ENCODE measurements at regions of chr1 and their contacts with region 1.

Region 1: DNA sequence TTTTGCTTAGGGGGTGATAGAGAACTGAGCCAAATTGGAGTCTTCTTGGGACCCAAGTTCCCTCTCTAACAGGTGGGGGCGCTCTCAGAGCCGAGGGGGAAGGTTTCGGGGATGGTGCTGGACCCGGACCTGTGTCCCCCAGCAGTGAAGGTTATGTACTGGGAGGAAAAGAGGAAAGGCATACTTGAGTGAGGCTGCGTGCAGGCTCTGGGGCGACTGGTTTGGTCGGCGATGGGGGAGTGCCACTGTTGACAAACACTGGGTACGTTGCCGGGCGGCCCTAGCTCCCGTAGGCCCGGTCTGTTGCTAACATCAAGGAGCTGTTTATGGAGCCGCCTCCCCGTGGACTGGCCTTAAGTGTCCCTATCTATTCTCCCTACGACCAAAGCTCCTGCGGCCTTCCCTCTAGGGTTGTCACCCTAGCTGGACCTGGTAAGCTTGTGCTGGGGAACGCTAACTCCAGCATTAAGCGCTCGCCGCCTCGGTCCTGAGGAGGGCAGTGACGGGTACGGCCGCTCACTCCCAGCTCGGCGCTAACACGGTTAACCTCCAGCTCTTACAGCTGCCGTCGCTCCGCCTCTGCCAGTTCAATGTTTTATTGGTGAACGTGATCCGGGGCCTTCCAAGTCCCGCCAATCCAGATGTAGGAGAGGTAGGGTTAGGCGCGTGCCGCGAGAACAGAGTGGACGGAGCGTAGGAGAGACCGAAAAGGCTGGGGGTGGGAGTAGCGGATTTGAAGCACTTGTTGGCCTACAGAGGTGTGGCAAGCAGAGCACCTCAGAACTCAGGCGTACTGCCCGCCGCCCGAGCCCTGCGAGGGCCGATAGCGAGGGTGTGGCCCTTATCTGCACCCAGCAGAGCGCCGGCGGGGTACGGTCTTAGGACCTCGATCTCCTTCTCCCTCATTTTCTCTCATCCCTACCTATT is at the start of gene PPOX:
- DNase-seq: peak; percentile 99
- H3K4me3 ChIP-seq: peak within 1 kb of the TSS; percentile 81 to 87 (median 87)
- H3K27ac ChIP-seq: peak within 1 kb of the TSS; percentile 74
- H3K4me1 ChIP-seq: peaks cover 16% of the 10 kb centered on the region
- H3K27me3 ChIP-seq: no peaks in the 10 kb centered on the region
- CTCF ChIP-seq: peak; percentile 42 to 60
- POLR2A ChIP-seq: peak; percentile 21
- total RNA-seq, gene PPOX: 28.5 and 28.9 TPM in 2 replicates

Region 2: DNA sequence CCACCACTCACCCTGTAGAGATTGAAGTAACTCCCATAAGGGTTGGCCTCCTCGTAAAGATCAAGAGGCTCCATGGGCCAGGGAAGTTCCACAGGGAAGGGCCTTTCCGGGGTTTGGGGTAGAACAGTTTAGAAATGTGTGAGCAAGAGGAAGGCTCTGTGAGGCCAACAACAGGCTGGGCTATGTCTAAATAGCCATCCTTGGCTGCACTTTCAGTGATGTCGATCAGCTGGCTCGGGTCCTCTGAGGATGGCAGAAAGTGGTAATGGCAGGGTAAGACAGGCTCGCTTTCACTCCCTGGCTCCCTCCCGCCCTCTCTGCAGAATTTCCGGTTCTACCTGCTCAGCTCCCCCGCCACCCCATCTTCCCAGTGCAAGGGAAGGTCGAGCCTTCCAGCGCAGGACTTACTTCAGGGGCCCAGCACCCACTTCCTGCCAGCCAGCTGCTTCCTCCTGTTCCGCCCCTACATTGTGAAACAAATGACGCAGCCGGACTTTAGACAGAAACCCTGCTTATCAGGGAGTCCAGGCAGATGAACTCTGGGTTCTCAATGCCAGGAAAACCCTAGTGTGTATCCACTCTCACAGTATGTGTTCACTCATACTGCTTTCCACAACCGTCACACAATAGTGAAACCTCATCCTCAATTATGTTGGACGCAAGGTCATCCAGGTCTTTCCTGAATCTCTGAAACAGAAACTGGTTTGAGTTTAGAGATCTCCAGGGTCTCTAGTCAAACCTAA is 152.3 kb before region 1 on chr1:
- CTCF ChIA-PET with region 1: no interaction called
- POLR2A ChIA-PET with region 1: no interaction called
- dilution Hi-C with region 1: no loop called
- intact Hi-C with region 1: no loop called
- DNase-seq: peak; percentile 99
- H3K4me3 ChIP-seq: peak overlapping the region in 2 of 3 experiments; percentile 1 to 21
- H3K27ac ChIP-seq: peak overlapping the region; percentile 99
- H3K4me1 ChIP-seq: peaks cover 37% of the 10 kb centered on the region
- H3K27me3 ChIP-seq: no peaks in the 10 kb centered on the region
- CTCF ChIP-seq: no peak
- POLR2A ChIP-seq: peak; percentile 70

Region 3: DNA sequence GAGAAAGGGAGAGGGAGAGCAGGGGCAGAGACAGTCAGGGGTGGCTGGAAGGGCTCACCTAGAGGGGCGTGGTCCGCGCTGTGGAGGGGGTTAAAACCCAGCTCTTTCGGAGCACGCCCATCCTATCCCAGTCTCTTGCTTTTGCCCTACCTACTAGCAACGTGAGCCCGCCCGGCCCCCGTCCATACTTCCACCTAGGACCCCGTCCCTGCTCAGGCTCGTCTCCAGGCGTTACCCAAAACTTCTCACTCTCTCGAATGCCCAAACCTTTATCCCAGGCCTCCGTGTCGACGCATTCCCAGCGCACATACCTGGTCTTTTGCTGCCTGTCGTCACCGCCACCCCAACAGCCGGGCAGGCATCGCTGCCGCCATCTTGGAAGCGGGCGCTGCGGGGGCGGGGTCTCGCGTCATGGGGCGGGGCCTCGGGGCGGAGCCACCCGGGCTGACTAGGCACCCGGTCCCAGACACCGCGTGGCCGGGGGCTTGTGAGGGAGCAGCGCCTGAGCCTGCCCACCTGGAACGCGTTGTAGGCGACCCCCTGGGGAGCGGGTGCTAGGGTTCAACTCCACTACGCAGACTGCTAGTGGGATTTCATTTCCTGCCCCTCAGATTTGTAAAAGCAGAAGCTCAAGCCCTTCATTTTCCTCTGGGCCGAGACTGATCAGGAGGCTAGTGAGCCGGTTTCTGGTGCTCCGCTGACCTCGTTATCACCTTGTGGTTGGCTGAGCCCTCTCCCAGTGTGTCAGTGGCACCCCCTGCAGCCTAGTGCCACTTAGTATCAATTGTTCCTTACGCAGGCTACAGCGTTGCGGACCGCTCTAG is 11.3 kb after region 1 on chr1 and contains the start of gene B4GALT3:
- CTCF ChIA-PET with region 1: interaction called, 10 read pairs
- POLR2A ChIA-PET with region 1: interaction called, 5 read pairs
- dilution Hi-C with region 1: no loop called
- intact Hi-C with region 1: loop called (anchors 1 kb)
- DNase-seq: peak; percentile 85
- H3K4me3 ChIP-seq: peak within 1 kb of the TSS; percentile 38 to 60 (median 57)
- H3K27ac ChIP-seq: peak within 1 kb of the TSS; percentile 14
- H3K4me1 ChIP-seq: peaks cover 11% of the 10 kb centered on the region
- H3K27me3 ChIP-seq: no peaks in the 10 kb centered on the region
- CTCF ChIP-seq: no peak
- POLR2A ChIP-seq: peak; percentile 94
- total RNA-seq, gene B4GALT3: 39.5 and 39.8 TPM in 2 replicates

Region 4: DNA sequence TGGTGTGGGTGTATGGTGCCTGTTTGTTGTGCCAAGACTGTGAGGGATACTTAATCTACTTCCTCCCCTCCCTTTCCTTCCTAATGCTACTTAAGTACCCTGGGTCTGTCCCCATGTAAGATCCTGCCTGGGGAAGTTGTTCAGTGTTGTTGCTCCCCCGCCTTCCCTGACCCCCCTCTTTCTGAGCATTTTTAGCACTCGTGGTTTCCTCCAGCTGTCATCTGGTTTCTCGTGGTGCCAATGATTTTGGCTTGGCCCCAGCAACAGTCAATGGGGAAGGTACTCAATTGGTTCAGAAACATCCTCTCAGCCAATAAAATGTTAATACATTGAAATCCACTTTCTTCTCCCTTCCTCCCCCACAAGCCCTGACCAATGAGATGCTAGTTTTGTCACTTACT is 19.3 kb after region 1 on chr1:
- CTCF ChIA-PET with region 1: interaction called, 10 read pairs
- POLR2A ChIA-PET with region 1: interaction called, 5 read pairs
- dilution Hi-C with region 1: no loop called
- intact Hi-C with region 1: loop called (anchors 1 kb)
- DNase-seq: peak; percentile 99
- H3K4me3 ChIP-seq: no peak overlapping the region
- H3K27ac ChIP-seq: peak overlapping the region; percentile 48
- H3K4me1 ChIP-seq: peaks cover 28% of the 10 kb centered on the region
- H3K27me3 ChIP-seq: no peaks in the 10 kb centered on the region
- CTCF ChIP-seq: no peak
- POLR2A ChIP-seq: peak; percentile 37

Region 5: GRCh38 chr1:161192476-161193465 is 26.8 kb after region 1 on chr1:
- CTCF ChIA-PET with region 1: interaction called, 18 read pairs
- POLR2A ChIA-PET with region 1: interaction called, 3 read pairs
- dilution Hi-C with region 1: no loop called
- intact Hi-C with region 1: loop called (anchors 1 kb)
- DNase-seq: peak; percentile 68
- H3K4me3 ChIP-seq: no peak overlapping the region
- H3K27ac ChIP-seq: no peak overlapping the region
- H3K4me1 ChIP-seq: peaks cover 21% of the 10 kb centered on the region
- H3K27me3 ChIP-seq: no peaks in the 10 kb centered on the region
- CTCF ChIP-seq: peak; percentile 93
- POLR2A ChIP-seq: no peak

Region 6: GRCh38 chr1:161201828-161202725 is 36.1 kb after region 1 on chr1 and contains the start of gene NDUFS2:
- CTCF ChIA-PET with region 1: interaction called, 18 read pairs
- POLR2A ChIA-PET with region 1: interaction called, 4 read pairs
- dilution Hi-C with region 1: no loop called
- intact Hi-C with region 1: loop called (anchors 1 kb)
- DNase-seq: peak; percentile 98
- H3K4me3 ChIP-seq: peak within 1 kb of the TSS; percentile 72 to 96 (median 75)
- H3K27ac ChIP-seq: peak within 1 kb of the TSS; percentile 98
- H3K4me1 ChIP-seq: peaks cover 59% of the 10 kb centered on the region
- H3K27me3 ChIP-seq: no peaks in the 10 kb centered on the region
- CTCF ChIP-seq: peak in 1 of 2 donors; percentile 9
- POLR2A ChIP-seq: peak; percentile 93
- total RNA-seq, gene NDUFS2: 95.1 and 99.7 TPM in 2 replicates

Region 7: DNA sequence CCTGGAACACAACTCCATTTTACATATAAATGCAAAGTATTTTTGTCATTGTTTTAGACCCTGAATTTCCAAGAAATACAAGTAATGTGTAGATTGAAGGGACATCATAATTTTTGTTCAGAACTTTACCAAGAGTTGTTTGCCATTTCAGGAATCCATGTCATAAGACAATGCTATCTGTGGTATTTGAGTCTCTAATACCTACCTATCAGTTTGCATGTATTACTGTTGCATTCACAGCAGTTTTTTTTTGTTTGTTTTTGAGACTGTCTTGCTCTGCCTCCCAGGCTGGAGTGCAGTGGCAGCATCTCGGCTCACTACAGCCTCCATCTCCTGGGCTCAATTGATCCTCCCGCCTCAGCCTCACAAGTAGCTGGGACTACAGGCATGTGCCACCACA is 126.6 kb after region 1 on chr1:
- CTCF ChIA-PET with region 1: interaction called, 11 read pairs
- POLR2A ChIA-PET with region 1: no interaction called
- dilution Hi-C with region 1: no loop called
- intact Hi-C with region 1: no loop called
- DNase-seq: no peak
- H3K4me3 ChIP-seq: no peak overlapping the region
- H3K27ac ChIP-seq: no peak overlapping the region
- H3K4me1 ChIP-seq: no peaks in the 10 kb centered on the region
- H3K27me3 ChIP-seq: peaks cover 5 to 8% of the 10 kb centered on the region in 2 experiments
- CTCF ChIP-seq: no peak
- POLR2A ChIP-seq: no peak

Region 8: DNA sequence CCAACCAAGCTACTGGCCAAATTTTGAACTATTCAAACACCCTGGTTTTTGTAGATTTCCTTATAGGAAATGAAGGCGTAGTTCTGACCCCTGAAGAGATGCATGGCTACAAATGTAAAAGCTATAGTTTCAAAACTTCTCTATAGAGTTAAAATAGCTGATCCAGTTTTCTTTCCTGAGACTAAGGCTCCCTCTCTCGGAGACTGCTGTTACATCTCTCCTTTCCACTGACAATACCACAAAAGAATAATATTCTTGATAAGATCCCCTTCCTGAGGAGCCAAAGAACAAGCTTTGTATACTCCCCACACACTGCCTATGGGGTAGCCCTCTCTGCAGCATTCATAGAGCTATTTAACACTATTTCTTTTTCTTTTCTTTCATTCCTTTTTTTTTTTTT is 208.4 kb after region 1 on chr1:
- CTCF ChIA-PET with region 1: interaction called, 17 read pairs
- POLR2A ChIA-PET with region 1: no interaction called
- dilution Hi-C with region 1: no loop called
- intact Hi-C with region 1: no loop called
- DNase-seq: peak; percentile 49
- H3K4me3 ChIP-seq: no peak overlapping the region
- H3K27ac ChIP-seq: no peak overlapping the region
- H3K4me1 ChIP-seq: no peaks in the 10 kb centered on the region
- H3K27me3 ChIP-seq: no peaks in the 10 kb centered on the region
- CTCF ChIP-seq: peak; percentile 14 to 48
- POLR2A ChIP-seq: no peak

Measured in endothelial cell of umbilical vein (primary cell).